ENCODE measurements at regions of chr7 and their contacts with region 1.

Region 1: GRCh38 chr7:141763797-141764196 is at the start of gene TAS2R3:
- DNase-seq: no peak
- ATAC-seq: no peak
- H3K4me3 Mint-ChIP-seq: no peak within 1 kb of the TSS
- H3K27ac Mint-ChIP-seq: no peak within 1 kb of the TSS
- H3K4me1 Mint-ChIP-seq: no peaks in the 10 kb centered on the region
- H3K27me3 Mint-ChIP-seq: no peaks in the 10 kb centered on the region
- CTCF ChIP-seq: no peak
- total RNA-seq, gene TAS2R3: 0.94 to 1.0 TPM

Region 2: GRCh38 chr7:141748401-141748800 is 15.4 kb before region 1 on chr7:
- CTCF ChIA-PET with region 1: no interaction called
- POLR2A ChIA-PET with region 1: no interaction called
- intact Hi-C with region 1: no loop called
- DNase-seq: no peak
- ATAC-seq: no peak
- H3K4me3 Mint-ChIP-seq: no peak overlapping the region
- H3K27ac Mint-ChIP-seq: no peak overlapping the region
- H3K4me1 Mint-ChIP-seq: peaks cover 3% of the 10 kb centered on the region
- H3K27me3 Mint-ChIP-seq: no peaks in the 10 kb centered on the region
- CTCF ChIP-seq: no peak

Region 3: DNA sequence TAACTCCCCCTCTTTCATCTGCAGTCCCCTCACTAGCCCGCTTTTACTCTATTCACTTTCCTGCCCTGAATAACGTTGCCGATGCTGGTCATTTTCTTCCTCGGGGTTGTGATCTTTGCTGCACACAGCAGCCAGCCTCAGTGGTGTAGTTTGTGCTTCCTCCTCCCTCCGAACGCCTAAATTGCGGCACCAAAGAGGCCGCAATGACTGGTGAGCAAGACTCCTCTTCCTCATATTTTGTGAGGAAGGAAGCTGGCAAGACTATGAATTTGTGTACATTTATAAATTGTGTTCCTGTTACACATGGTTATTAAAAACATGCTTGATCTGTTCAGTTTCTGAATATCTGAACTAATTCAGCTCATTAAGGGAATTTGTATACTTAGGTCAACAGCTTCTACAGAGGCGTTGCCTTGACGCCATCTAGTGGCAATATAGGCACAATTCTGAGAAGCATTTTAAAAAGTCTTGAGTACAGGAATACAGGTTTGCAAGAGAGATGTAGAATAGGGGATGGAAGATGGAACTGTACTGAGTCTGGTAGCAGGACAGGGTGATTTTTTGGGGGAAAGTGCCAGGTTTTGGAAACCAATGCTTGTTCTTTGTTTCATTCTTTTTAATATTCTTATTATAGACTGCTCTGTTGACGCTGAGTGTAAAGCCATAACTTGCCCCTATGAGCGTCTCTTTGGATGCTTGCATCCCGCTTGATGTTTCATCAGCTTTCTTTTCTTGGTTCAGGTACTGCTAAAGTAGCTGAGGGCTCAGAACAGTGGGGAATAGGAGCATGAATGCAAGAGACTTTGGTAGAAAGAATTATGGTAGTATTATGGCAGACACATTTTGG is 22.1 kb after region 1 on chr7:
- CTCF ChIA-PET with region 1: interaction called, 11 read pairs
- POLR2A ChIA-PET with region 1: interaction called, 5 read pairs
- intact Hi-C with region 1: no loop called
- DNase-seq: peak; percentile 33
- ATAC-seq: peak; percentile 64
- H3K4me3 Mint-ChIP-seq: no peak overlapping the region
- H3K27ac Mint-ChIP-seq: no peak overlapping the region
- H3K4me1 Mint-ChIP-seq: no peaks in the 10 kb centered on the region
- H3K27me3 Mint-ChIP-seq: no peaks in the 10 kb centered on the region
- CTCF ChIP-seq: peak; percentile 83